ENCODE measurements at regions of chrX and their contacts with region 1.

Region 1: GRCh38 chrX:101803451-101803850 is 128.4 kb downstream of the ZMAT1 start:
- DNase-seq: no peak
- ATAC-seq: no peak
- H3K4me3 ChIP-seq: no peak overlapping the region
- H3K27ac ChIP-seq: no peak overlapping the region
- H3K4me1 ChIP-seq: no peaks in the 10 kb centered on the region
- H3K27me3 ChIP-seq: no peaks in the 10 kb centered on the region
- CTCF ChIP-seq: peak in 3 of 4 donors; percentile 20 to 48 (median 31)

Region 2: DNA sequence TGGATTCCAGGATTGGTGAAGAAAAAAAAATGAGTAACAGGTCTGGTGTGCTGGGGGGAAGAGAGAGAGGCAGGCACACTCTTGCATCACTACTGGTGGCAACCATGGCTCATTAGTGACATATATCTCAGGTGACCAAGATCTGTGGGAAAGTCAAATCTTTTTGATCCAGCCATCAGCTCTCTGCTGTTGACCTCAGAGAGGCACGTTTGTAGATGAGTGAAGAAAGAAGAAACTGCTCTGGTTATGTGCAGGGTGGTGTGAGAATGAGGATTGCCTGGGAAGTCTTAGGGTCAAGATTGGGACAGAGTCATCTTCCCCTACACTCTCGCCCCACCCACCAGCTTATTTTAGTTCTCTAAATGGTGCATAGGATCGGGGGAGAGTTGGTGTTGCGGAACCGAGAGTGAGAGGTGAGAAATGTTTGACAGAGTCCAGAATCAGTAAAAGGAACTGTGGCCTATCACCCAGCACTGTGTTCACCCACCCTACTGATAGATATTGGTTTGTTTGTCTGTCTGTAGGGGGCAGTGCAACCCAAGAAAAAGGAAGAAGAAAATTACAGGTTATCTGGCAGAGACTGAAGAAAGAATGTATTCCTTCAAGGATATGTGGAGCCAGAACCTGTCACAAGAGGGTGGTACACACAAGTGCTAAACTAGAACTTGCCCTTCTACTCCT is 207.6 kb before region 1 on chrX:
- intact Hi-C with region 1: loop called in 1 of 3 experiments (anchors 10 kb)
- DNase-seq: peak in 2 of 6 donors; percentile 27 to 34
- ATAC-seq: peak; percentile 64 to 94 (median 90)
- H3K4me3 ChIP-seq: no peak overlapping the region
- H3K27ac ChIP-seq: no peak overlapping the region
- H3K4me1 ChIP-seq: no peaks in the 10 kb centered on the region
- H3K27me3 ChIP-seq: peaks cover 0 to 15% (median 2%) of the 10 kb centered on the region in 4 donors
- CTCF ChIP-seq: peak in 3 of 4 donors; percentile 37 to 48 (median 43)

Measured in pancreas (tissue), 10 donors.